MCF 10A (cell line): ENCODE measurements at regions of chr14 and their contacts with region 1.

Region 1: GRCh38 chr14:72516936-72517700 is 376.8 kb downstream of the DPF3 start:
- DNase-seq: peak; percentile 68
- H3K4me3 Mint-ChIP-seq: no peak overlapping the region
- H3K27ac Mint-ChIP-seq: no peak overlapping the region
- H3K4me1 Mint-ChIP-seq: no peaks in the 10 kb centered on the region
- H3K27me3 Mint-ChIP-seq: peaks cover under 1% of the 10 kb centered on the region
- CTCF ChIP-seq: peak; percentile 76

Region 2: DNA sequence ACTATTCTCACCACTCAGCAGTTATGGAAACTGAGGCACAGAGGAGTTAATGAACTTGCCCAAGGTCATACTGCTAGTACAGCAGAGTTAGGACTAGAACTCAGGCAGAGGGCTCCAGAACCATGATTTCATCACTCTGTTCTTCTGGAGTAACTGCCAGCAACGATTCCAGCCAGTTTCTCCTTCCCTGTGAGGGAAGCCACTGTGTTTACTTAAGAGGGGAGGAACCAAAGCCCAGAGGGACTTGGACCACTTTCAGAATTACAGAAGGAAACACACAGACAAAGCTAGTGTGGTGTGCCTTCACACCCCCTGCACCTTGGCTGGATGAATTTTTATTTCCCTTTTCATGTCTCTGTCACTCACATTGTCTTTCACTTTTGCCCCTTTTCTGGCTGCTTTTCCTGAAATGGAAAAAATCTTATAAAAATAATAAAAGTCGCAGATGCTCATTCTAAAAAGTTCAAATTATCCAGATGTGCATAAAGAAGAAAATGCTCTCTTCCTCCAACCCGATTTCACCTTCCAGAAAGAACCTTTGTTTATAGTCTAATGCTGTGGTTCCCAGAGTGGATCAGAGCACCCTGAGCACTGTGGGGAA is 21.4 kb before region 1 on chr14:
- CTCF ChIA-PET with region 1: interaction called, 10 read pairs
- POLR2A ChIA-PET with region 1: no interaction called
- intact Hi-C with region 1: no loop called
- DNase-seq: no peak
- H3K4me3 Mint-ChIP-seq: no peak overlapping the region
- H3K27ac Mint-ChIP-seq: no peak overlapping the region
- H3K4me1 Mint-ChIP-seq: no peaks in the 10 kb centered on the region
- H3K27me3 Mint-ChIP-seq: no peaks in the 10 kb centered on the region
- CTCF ChIP-seq: no peak

Region 3: GRCh38 chr14:72544619-72545387 is 27.7 kb after region 1 on chr14:
- CTCF ChIA-PET with region 1: interaction called, 15 read pairs
- POLR2A ChIA-PET with region 1: no interaction called
- intact Hi-C with region 1: no loop called
- DNase-seq: peak; percentile 21
- H3K4me3 Mint-ChIP-seq: no peak overlapping the region
- H3K27ac Mint-ChIP-seq: peak overlapping the region; percentile 46
- H3K4me1 Mint-ChIP-seq: peaks cover 16% of the 10 kb centered on the region
- H3K27me3 Mint-ChIP-seq: no peaks in the 10 kb centered on the region
- CTCF ChIP-seq: no peak

Region 4: GRCh38 chr14:72888636-72889201 is 371.6 kb after region 1 on chr14:
- CTCF ChIA-PET with region 1: interaction called, 12 read pairs
- POLR2A ChIA-PET with region 1: interaction called, 9 read pairs
- intact Hi-C with region 1: no loop called
- DNase-seq: no peak
- H3K4me3 Mint-ChIP-seq: no peak overlapping the region
- H3K27ac Mint-ChIP-seq: no peak overlapping the region
- H3K4me1 Mint-ChIP-seq: no peaks in the 10 kb centered on the region
- H3K27me3 Mint-ChIP-seq: no peaks in the 10 kb centered on the region
- CTCF ChIP-seq: no peak

Region 5: GRCh38 chr14:72948481-72949138 is 431.5 kb after region 1 on chr14:
- CTCF ChIA-PET with region 1: interaction called, 135 read pairs
- POLR2A ChIA-PET with region 1: interaction called, 3 read pairs
- intact Hi-C with region 1: loop called (anchors 1 kb)
- DNase-seq: peak; percentile 62
- H3K4me3 Mint-ChIP-seq: no peak overlapping the region
- H3K27ac Mint-ChIP-seq: no peak overlapping the region
- H3K4me1 Mint-ChIP-seq: no peaks in the 10 kb centered on the region
- H3K27me3 Mint-ChIP-seq: no peaks in the 10 kb centered on the region
- CTCF ChIP-seq: peak; percentile 79